Activated B cell treated with CpG ODN at 0.5 μM for 24 hours (primary cell): ENCODE measurements at regions of chr6 and their contacts with region 1.

Region 1: DNA sequence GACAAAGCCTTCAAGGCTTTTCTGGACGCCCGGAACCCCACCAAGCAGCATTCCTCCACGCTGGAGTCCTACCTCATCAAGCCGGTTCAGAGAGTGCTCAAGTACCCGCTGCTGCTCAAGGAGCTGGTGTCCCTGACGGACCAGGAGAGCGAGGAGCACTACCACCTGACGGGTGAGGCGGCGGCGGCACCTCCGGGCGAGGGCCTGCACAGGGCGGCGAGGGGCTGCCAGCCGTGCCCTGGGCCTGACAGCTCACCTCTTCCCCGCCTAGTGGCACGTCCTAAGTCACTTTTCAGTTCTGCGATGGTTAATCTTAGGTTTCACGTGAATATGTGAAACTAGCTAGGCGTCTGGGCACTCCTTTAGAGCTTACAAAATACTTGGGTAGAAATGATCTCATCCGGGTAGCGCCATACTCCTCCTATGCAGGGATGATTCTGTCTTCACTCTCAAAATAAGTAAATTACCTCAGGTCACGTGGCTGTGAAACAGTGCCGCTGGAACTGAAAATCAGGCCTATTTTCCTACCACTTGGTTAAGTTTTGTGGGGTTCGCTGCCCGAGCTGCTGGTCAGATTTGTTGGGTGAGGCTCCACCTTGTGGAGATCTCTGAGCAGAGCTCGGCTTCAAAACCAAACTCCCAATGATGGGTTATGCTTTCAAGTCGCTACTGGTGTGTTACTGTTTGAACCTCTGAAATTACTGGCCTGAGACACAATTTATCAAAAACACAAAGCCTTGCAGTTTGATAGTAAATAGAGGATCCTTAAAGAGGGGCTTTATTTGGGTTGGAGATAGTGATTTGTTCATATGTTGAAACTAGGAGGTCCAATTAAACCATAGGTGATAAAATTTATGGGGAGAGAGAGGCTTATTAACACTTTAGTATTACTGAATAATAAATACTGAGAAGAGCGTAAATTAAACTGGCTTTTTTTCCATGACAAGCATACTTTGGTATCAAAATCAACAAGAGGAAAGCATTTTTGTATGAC is 15.5 kb upstream of the CLDN20 start:
- DNase-seq: no peak
- ATAC-seq: peak; percentile 49
- H3K4me3 Mint-ChIP-seq: no peak overlapping the region
- H3K27ac Mint-ChIP-seq: peak overlapping the region; percentile 25
- H3K4me1 Mint-ChIP-seq: peaks cover 3% of the 10 kb centered on the region
- H3K27me3 Mint-ChIP-seq: no peaks in the 10 kb centered on the region
- CTCF ChIP-seq: no peak

Region 2: GRCh38 chr6:154754152-154754551 is 494.2 kb before region 1 on chr6:
- CTCF ChIA-PET with region 1: no interaction called
- POLR2A ChIA-PET with region 1: no interaction called
- intact Hi-C with region 1: no loop called
- DNase-seq: no peak
- ATAC-seq: no peak
- H3K4me3 Mint-ChIP-seq: no peak overlapping the region
- H3K27ac Mint-ChIP-seq: no peak overlapping the region
- H3K4me1 Mint-ChIP-seq: peaks cover 70% of the 10 kb centered on the region
- H3K27me3 Mint-ChIP-seq: no peaks in the 10 kb centered on the region
- CTCF ChIP-seq: no peak

Region 3: DNA sequence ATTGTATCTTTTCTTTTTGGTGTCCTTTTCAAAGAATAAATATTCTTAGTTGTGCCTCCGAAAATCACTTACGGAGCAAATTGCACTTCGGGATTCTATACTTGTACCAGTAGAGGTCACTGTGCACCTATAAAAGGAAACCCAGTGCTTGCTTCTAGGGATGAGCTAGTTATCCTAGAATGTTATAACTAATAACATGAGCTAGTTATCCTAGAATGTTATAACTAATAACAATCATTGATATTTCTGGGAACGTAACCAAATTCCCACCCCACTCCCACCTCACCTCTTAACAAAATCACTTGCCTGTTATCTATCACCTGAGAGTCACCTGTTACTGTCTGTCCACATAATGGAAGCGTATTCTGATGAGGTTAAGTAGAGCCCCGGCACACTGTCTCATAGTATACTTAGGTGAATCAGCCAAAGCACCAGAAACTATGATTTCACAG is 380.1 kb before region 1 on chr6:
- CTCF ChIA-PET with region 1: interaction called, 6 read pairs
- POLR2A ChIA-PET with region 1: no interaction called
- intact Hi-C with region 1: loop called (anchors 1 kb)
- DNase-seq: no peak
- ATAC-seq: peak; percentile 28
- H3K4me3 Mint-ChIP-seq: no peak overlapping the region
- H3K27ac Mint-ChIP-seq: no peak overlapping the region
- H3K4me1 Mint-ChIP-seq: no peaks in the 10 kb centered on the region
- H3K27me3 Mint-ChIP-seq: no peaks in the 10 kb centered on the region
- CTCF ChIP-seq: peak; percentile 86

Region 4: GRCh38 chr6:154928325-154928922 is 319.9 kb before region 1 on chr6:
- CTCF ChIA-PET with region 1: interaction called, 6 read pairs
- POLR2A ChIA-PET with region 1: no interaction called
- intact Hi-C with region 1: loop called (anchors 1 kb)
- DNase-seq: no peak
- ATAC-seq: no peak
- H3K4me3 Mint-ChIP-seq: no peak overlapping the region
- H3K27ac Mint-ChIP-seq: no peak overlapping the region
- H3K4me1 Mint-ChIP-seq: peaks cover 19% of the 10 kb centered on the region
- H3K27me3 Mint-ChIP-seq: no peaks in the 10 kb centered on the region
- CTCF ChIP-seq: no peak

Region 5: GRCh38 chr6:155181498-155181897 is 66.8 kb before region 1 on chr6:
- CTCF ChIA-PET with region 1: interaction called, 67 read pairs
- POLR2A ChIA-PET with region 1: interaction called, 14 read pairs
- intact Hi-C with region 1: loop called (anchors 1 kb)
- DNase-seq: no peak
- ATAC-seq: peak; percentile 67
- H3K4me3 Mint-ChIP-seq: peak overlapping the region; percentile 12
- H3K27ac Mint-ChIP-seq: peak overlapping the region; percentile 88
- H3K4me1 Mint-ChIP-seq: peaks cover 62% of the 10 kb centered on the region
- H3K27me3 Mint-ChIP-seq: no peaks in the 10 kb centered on the region
- CTCF ChIP-seq: no peak